Naive thymus-derived CD4-positive, alpha-beta T cell (primary cell): ENCODE measurements at regions of chr18 and their contacts with region 1.

Region 1: DNA sequence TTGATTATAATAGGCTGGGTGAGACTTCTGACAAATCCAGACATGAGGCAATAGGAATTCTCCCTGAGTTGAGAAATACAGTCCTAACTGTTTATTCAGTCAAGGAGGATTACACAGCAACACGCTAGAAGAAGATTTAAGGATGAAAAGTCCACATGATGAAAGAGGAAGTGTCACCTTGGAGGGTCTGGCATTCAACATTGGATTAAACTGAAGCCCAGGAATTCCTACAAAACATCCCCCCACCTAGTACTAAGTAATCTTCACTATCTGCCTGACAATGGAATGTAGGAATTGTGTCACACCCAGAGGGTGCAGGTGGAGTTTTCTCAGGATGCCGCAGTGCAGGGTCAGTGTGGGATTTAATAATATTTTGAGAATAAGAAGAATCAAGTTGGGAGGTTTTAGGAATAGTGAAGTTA is 142.4 kb downstream of the SOCS6 start:
- DNase-seq: no peak
- ATAC-seq: no peak
- H3K4me3 ChIP-seq: no peak overlapping the region
- H3K4me3 Mint-ChIP-seq: no peak overlapping the region
- H3K27ac ChIP-seq: no peak overlapping the region
- H3K27ac Mint-ChIP-seq: no peak overlapping the region
- H3K4me1 ChIP-seq: no peaks in the 10 kb centered on the region
- H3K4me1 Mint-ChIP-seq: no peaks in the 10 kb centered on the region
- H3K27me3 ChIP-seq: no peaks in the 10 kb centered on the region
- H3K27me3 Mint-ChIP-seq: no peaks in the 10 kb centered on the region

Region 2: DNA sequence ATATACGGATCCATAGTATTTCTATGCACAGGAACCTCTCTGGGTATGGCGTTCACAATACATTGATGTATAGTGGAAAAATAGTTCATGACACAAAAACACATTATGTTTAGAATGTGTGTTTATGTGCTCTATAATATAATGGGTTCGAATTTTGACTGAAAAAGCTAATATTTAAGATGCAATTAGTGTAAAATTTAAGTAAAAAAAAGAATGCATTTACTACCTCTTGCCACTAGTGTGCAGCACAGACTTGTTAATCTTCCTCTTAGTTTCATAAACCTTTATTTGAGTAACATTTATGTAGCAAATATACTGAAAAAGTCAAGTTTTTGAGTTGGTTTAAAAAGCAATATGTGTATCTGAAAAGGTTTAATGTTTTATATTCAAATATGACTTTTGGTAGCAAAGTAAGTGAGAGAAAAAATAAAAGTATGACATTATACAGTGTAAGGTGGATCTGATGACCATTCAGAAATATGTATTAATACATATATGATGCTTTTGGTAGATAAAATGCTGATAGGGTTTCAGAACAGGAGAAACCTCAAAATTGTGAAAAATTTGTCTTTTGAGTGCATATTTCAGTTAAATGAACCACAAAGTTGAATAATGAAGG is 1583.9 kb before region 1 on chr18:
- CTCF ChIA-PET with region 1: interaction called, 3 read pairs
- POLR2A ChIA-PET with region 1: no interaction called
- intact Hi-C with region 1: loop called in 1 of 2 experiments (anchors 1 kb)
- DNase-seq: peak in 3 of 9 donors; percentile 2 to 19 (median 7)
- ATAC-seq: peak; percentile 42
- H3K4me3 ChIP-seq: no peak overlapping the region
- H3K4me3 Mint-ChIP-seq: no peak overlapping the region
- H3K27ac ChIP-seq: no peak overlapping the region
- H3K27ac Mint-ChIP-seq: no peak overlapping the region
- H3K4me1 ChIP-seq: no peaks in the 10 kb centered on the region
- H3K4me1 Mint-ChIP-seq: no peaks in the 10 kb centered on the region
- H3K27me3 ChIP-seq: no peaks in the 10 kb centered on the region
- H3K27me3 Mint-ChIP-seq: no peaks in the 10 kb centered on the region

Region 3: GRCh38 chr18:70195852-70196434 is 235.3 kb before region 1 on chr18:
- CTCF ChIA-PET with region 1: interaction called, 18 read pairs
- POLR2A ChIA-PET with region 1: no interaction called
- intact Hi-C with region 1: loop called (anchors 1 kb)
- DNase-seq: peak in 5 of 9 donors; percentile 12 to 31 (median 18)
- ATAC-seq: peak; percentile 62
- H3K4me3 ChIP-seq: no peak overlapping the region
- H3K4me3 Mint-ChIP-seq: no peak overlapping the region
- H3K27ac ChIP-seq: no peak overlapping the region
- H3K27ac Mint-ChIP-seq: no peak overlapping the region
- H3K4me1 ChIP-seq: no peaks in the 10 kb centered on the region
- H3K4me1 Mint-ChIP-seq: peaks cover 0 to 18% (median 2%) of the 10 kb centered on the region in 7 donors
- H3K27me3 ChIP-seq: no peaks in the 10 kb centered on the region
- H3K27me3 Mint-ChIP-seq: no peaks in the 10 kb centered on the region

Region 4: DNA sequence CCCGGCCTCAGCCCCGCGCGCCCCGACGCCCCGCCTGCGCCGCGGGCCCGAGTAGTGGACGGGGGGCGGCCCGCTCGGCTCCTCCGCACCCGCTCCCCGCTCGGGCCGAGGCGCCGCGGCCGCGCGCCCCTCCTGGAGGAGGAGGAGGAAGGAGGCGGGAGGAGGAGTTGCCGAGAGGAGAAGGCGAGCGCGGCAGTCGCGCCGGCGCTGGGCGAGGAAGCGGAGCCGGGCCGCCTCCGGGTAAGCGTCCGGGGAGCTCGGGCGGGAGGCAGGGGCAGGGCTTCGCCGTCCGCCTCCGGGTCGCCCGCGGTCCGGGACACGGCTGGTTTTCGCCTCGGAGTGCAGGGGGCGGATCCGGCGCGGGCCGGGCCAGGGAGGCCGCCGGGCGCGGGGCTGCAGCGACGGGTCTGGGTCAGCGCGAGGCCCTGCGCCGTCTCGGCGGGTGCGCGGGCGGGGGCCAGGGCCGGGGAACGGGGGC is 142.3 kb before region 1 on chr18 and contains the start of gene SOCS6:
- CTCF ChIA-PET with region 1: no interaction called
- POLR2A ChIA-PET with region 1: no interaction called
- intact Hi-C with region 1: loop called in 1 of 2 experiments (anchors 10 kb)
- DNase-seq: peak in 7 of 9 donors; percentile 12 to 63 (median 26)
- ATAC-seq: peak; percentile 67
- H3K4me3 ChIP-seq: peak within 1 kb of the TSS; percentile 48
- H3K4me3 Mint-ChIP-seq: peak within 1 kb of the TSS; percentile 84 to 93 (median 88)
- H3K27ac ChIP-seq: no peak within 1 kb of the TSS
- H3K27ac Mint-ChIP-seq: peak within 1 kb of the TSS in 7 of 9 donors; percentile 4 to 92 (median 46)
- H3K4me1 ChIP-seq: no peaks in the 10 kb centered on the region
- H3K4me1 Mint-ChIP-seq: peaks cover 10 to 29% (median 26%) of the 10 kb centered on the region in 7 donors
- H3K27me3 ChIP-seq: no peaks in the 10 kb centered on the region
- H3K27me3 Mint-ChIP-seq: peaks cover 13 to 57% (median 41%) of the 10 kb centered on the region in 5 donors
- total RNA-seq, gene SOCS6: 1.8 to 4.6 (median 4.2) TPM

Region 5: GRCh38 chr18:70931942-70932814 is 501.0 kb after region 1 on chr18:
- CTCF ChIA-PET with region 1: no interaction called
- POLR2A ChIA-PET with region 1: no interaction called
- intact Hi-C with region 1: no loop called
- DNase-seq: peak in 5 of 9 donors; percentile 4 to 32 (median 19)
- ATAC-seq: no peak
- H3K4me3 ChIP-seq: no peak overlapping the region
- H3K4me3 Mint-ChIP-seq: no peak overlapping the region
- H3K27ac ChIP-seq: no peak overlapping the region
- H3K27ac Mint-ChIP-seq: peak overlapping the region in 3 of 9 donors; percentile 4 to 59 (median 16)
- H3K4me1 ChIP-seq: peaks cover 0 to 6% of the 10 kb centered on the region in 2 donors
- H3K4me1 Mint-ChIP-seq: peaks cover 0 to 10% (median 8%) of the 10 kb centered on the region in 7 donors
- H3K27me3 ChIP-seq: no peaks in the 10 kb centered on the region
- H3K27me3 Mint-ChIP-seq: no peaks in the 10 kb centered on the region